Breast epithelium (tissue), 4 donors: ENCODE measurements at regions of chr6 and their contacts with region 1.

Region 1: GRCh38 chr6:87951751-87952150 is 95.9 kb upstream of the SPACA1 start:
- DNase-seq: no peak
- H3K4me3 ChIP-seq: no peak overlapping the region
- H3K27ac ChIP-seq: no peak overlapping the region
- H3K4me1 ChIP-seq: no peaks in the 10 kb centered on the region
- H3K27me3 ChIP-seq: no peaks in the 10 kb centered on the region
- CTCF ChIP-seq: no peak
- POLR2A ChIP-seq: no peak

Region 2: GRCh38 chr6:87921034-87921433 is 30.7 kb before region 1 on chr6:
- intact Hi-C with region 1: loop called (anchors 2 kb)
- DNase-seq: no peak
- H3K4me3 ChIP-seq: no peak overlapping the region
- H3K27ac ChIP-seq: no peak overlapping the region
- H3K4me1 ChIP-seq: no peaks in the 10 kb centered on the region
- H3K27me3 ChIP-seq: no peaks in the 10 kb centered on the region
- CTCF ChIP-seq: no peak
- POLR2A ChIP-seq: no peak

Region 3: GRCh38 chr6:87932361-87932760 is 19.4 kb before region 1 on chr6:
- intact Hi-C with region 1: no loop called
- DNase-seq: no peak
- H3K4me3 ChIP-seq: no peak overlapping the region
- H3K27ac ChIP-seq: no peak overlapping the region
- H3K4me1 ChIP-seq: no peaks in the 10 kb centered on the region
- H3K27me3 ChIP-seq: no peaks in the 10 kb centered on the region
- CTCF ChIP-seq: no peak
- POLR2A ChIP-seq: no peak